Mammary epithelial cell (primary cell): ENCODE measurements at regions of chr14 and their contacts with region 1.

Region 1: DNA sequence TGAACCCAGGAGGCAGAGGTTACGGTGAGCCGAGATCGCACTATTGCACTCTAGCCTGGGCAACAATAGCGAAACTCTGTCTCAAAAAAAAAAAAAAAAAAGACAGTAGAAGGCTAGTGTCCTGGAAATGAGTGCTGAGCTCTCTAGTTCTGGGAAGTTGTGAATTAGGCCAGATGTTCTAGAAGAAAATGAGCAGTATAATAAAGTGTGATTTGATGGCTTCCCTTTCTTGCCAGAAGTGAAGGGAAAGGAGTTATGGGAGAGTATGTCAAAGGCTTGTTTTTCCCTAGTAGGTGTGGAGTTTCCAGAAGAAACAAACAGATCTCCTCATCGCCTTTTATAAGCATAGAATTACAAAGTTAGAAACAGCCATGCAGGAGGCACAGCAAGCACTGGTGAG is 20.5 kb downstream of the RNF212B start:
- DNase-seq: no peak
- H3K4me3 ChIP-seq: no peak overlapping the region
- H3K27ac ChIP-seq: no peak overlapping the region
- H3K4me1 ChIP-seq: no peaks in the 10 kb centered on the region
- H3K27me3 ChIP-seq: no peaks in the 10 kb centered on the region
- CTCF ChIP-seq: no peak

Region 2: GRCh38 chr14:23237772-23238594 is 20.3 kb before region 1 on chr14 and contains the start of gene RNF212B:
- CTCF ChIA-PET with region 1: no interaction called
- dilution Hi-C with region 1: no loop called
- in situ Hi-C with region 1: no loop called
- intact Hi-C with region 1: no loop called
- DNase-seq: peak; percentile 74
- H3K4me3 ChIP-seq: peak within 1 kb of the TSS; percentile 5 to 25 (median 19)
- H3K27ac ChIP-seq: no peak within 1 kb of the TSS
- H3K4me1 ChIP-seq: peaks cover 7% of the 10 kb centered on the region
- H3K27me3 ChIP-seq: no peaks in the 10 kb centered on the region
- CTCF ChIP-seq: no peak
- total RNA-seq, gene RNF212B: not detected

Region 3: DNA sequence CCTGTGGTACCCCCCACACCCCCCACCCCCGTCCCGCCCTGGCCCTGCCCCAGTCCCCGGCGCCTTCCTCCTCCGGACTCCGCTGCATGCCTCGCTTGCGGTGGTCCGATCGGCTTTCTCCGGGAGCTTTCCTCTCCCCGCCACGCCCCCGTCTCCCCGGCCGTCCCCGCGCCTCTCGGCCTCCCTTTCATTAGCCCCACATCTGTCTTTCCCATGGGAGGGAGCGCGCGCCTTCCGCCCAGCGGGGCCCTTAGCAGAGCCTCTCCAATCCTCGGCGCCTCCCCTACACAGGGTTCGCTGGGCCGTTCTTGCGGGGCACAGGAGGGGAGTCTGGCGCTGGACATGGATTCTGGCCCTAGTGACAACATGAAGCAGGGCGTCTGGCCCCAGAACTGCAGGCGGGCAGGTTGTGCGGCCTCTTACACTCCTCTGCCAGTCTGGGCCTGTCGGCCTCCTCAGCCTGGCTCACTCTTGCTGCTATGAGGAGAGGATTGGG is 108.2 kb after region 1 on chr14:
- CTCF ChIA-PET with region 1: no interaction called
- dilution Hi-C with region 1: loop called (anchors 5 kb)
- in situ Hi-C with region 1: loop called in 1 of 2 experiments (anchors 10 kb)
- intact Hi-C with region 1: no loop called
- DNase-seq: peak; percentile 60
- H3K4me3 ChIP-seq: peak overlapping the region in 2 of 3 experiments; percentile 12 to 34
- H3K27ac ChIP-seq: no peak overlapping the region
- H3K4me1 ChIP-seq: peaks cover 22% of the 10 kb centered on the region
- H3K27me3 ChIP-seq: peaks cover 7% of the 10 kb centered on the region
- CTCF ChIP-seq: no peak